HepG2 (cell line): ENCODE measurements at regions of chr4 and their contacts with region 1.

Region 1: GRCh38 chr4:3079694-3080123 is 5.2 kb downstream of the HTT start:
- DNase-seq: no peak
- ATAC-seq: no peak
- H3K4me3 ChIP-seq: no peak overlapping the region
- H3K27ac ChIP-seq: no peak overlapping the region
- H3K4me1 ChIP-seq: peaks cover 33% of the 10 kb centered on the region
- H3K27me3 ChIP-seq: no peaks in the 10 kb centered on the region; a peak in 1 of 5 replicates
- CTCF ChIP-seq: no peak
- EP300 ChIP-seq: no peak
- POLR2A ChIP-seq: no peak
- RAD21 ChIP-seq: no peak

Region 2: GRCh38 chr4:3021627-3022026 is 58.1 kb before region 1 on chr4:
- CTCF ChIA-PET with region 1: no interaction called
- POLR2A ChIA-PET with region 1: no interaction called
- in situ Hi-C with region 1: no loop called
- intact Hi-C with region 1: no loop called
- DNase-seq: no peak
- ATAC-seq: no peak
- H3K4me3 ChIP-seq: no peak overlapping the region
- H3K27ac ChIP-seq: no peak overlapping the region
- H3K4me1 ChIP-seq: no peaks in the 10 kb centered on the region
- H3K27me3 ChIP-seq: peaks cover 3 to 38% of the 10 kb centered on the region in 2 experiments
- CTCF ChIP-seq: no peak
- EP300 ChIP-seq: no peak
- POLR2A ChIP-seq: no peak
- RAD21 ChIP-seq: no peak

Region 3: DNA sequence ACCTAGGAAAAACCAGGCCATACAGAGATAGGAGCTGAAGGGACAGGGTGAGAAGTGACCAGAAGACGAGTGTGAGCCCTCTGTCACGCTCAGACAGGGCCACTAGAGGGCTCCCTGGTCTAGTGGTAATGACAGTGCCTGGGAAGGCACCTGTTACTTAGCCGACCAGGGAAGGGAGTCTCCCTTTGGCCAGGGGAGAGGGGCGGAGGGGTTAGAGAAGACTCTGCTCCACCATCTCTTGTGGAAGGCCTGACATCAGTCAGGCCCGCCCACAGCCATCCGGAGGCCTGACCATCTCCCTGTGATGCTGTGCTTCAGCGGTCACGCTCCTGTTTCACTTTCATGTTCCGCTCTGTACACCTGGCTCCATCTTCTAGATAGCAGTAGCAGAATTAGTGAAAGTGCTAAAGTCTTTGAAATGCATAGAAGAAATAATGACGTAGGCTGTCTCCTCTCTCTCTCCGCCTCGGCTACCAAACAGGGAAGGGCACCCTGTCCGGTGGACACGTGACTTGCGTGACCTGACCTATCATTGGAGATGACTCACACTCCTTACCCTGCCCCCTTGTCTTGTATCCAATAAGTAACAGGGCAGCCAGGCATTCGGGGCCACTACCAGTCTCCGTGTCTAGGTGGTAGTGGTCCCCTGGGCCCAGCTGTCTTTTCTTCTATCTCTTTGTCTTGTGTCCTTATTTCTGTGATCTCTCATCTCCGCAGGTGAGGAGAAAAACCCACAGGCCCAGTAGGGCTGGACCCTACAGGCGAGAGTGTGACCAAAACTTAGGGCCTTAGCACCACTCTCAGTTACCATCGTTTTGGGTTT is 32.0 kb before region 1 on chr4:
- CTCF ChIA-PET with region 1: no interaction called
- POLR2A ChIA-PET with region 1: no interaction called
- in situ Hi-C with region 1: no loop called
- intact Hi-C with region 1: loop called (anchors 1 kb)
- DNase-seq: peak; percentile 57
- ATAC-seq: peak; percentile 92
- H3K4me3 ChIP-seq: peak overlapping the region; percentile 43 to 70 (median 43); a peak in 5 of 6 replicates
- H3K27ac ChIP-seq: no peak overlapping the region
- H3K4me1 ChIP-seq: peaks cover 32% of the 10 kb centered on the region
- H3K27me3 ChIP-seq: peaks cover 0 to under 1% of the 10 kb centered on the region in 2 experiments; a peak in 1 of 5 replicates
- CTCF ChIP-seq: peak; percentile 92
- EP300 ChIP-seq: no peak
- POLR2A ChIP-seq: no peak
- RAD21 ChIP-seq: peak; percentile 86